ENCODE measurements at regions of chr14 and their contacts with region 1.

Region 1: DNA sequence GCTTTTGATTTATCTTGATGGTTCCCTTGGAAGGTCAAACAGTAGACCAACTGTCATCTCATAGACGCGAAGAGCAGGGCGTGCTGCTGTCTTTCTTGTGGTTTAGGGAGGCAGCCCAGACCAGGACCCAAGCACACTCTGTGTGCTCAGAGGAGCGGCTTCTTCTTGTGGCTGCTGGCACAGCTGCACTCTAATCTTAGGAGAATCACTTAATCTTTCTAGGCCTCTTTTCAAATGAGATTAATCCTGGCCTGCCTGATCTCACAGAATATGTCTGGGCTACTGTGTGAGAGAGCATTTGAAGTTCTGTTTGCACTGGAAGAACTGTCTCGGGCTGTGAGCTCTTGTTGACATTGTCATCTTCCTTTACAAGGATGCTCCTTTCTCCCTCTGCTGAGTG is 60.0 kb upstream of the TRAF3 start:
- DNase-seq: no peak
- ATAC-seq: no peak
- H3K4me3 ChIP-seq: no peak overlapping the region
- H3K27ac ChIP-seq: no peak overlapping the region
- H3K4me1 ChIP-seq: no peaks in the 10 kb centered on the region
- H3K27me3 ChIP-seq: no peaks in the 10 kb centered on the region
- CTCF ChIP-seq: no peak
- POLR2A ChIP-seq: no peak
- RAD21 ChIP-seq: no peak

Region 2: DNA sequence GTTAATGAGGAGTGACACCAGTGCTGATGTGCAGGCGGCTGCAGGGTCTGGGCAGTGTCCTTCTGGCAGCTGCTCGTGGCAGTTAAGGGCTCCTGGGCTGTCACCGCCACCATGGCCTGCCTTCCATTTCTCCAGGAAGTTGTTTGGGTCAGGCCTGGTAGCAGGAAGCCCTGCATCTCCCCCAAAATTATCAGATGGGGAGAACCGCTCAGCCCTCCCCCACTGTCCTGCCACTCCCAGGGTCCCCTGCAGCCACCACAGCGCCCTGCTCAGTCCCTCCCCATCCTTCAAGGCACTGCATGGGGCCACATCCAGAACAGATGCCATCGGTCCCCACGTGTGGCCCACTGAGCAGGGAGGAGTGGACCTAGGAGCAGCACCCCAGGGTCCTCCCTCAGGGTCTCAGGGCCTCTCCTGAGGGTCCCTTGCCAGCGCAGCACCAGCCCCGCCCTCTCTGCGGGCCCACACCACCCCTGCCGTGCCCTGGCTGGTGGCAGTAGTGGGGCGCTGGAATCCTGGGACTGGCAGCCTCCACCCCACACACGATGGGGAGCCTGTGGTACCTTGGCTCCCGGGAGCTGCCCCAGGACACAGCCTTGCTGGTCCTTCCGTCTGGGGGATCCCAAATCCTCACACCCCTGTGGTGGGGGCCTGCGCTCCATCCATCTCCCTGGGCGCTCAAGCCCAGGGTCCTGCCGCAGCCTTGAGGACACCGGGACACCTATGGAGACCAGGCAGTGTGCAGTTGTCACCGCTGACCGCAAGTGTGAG is 194.9 kb after region 1 on chr14:
- CTCF ChIA-PET with region 1: no interaction called
- POLR2A ChIA-PET with region 1: interaction called, 11 read pairs
- dilution Hi-C with region 1: no loop called
- in situ Hi-C with region 1: no loop called
- intact Hi-C with region 1: no loop called
- DNase-seq: no peak
- ATAC-seq: no peak
- H3K4me3 ChIP-seq: no peak overlapping the region
- H3K27ac ChIP-seq: no peak overlapping the region
- H3K4me1 ChIP-seq: no peaks in the 10 kb centered on the region
- H3K27me3 ChIP-seq: no peaks in the 10 kb centered on the region
- CTCF ChIP-seq: no peak
- POLR2A ChIP-seq: no peak
- RAD21 ChIP-seq: no peak

Region 3: DNA sequence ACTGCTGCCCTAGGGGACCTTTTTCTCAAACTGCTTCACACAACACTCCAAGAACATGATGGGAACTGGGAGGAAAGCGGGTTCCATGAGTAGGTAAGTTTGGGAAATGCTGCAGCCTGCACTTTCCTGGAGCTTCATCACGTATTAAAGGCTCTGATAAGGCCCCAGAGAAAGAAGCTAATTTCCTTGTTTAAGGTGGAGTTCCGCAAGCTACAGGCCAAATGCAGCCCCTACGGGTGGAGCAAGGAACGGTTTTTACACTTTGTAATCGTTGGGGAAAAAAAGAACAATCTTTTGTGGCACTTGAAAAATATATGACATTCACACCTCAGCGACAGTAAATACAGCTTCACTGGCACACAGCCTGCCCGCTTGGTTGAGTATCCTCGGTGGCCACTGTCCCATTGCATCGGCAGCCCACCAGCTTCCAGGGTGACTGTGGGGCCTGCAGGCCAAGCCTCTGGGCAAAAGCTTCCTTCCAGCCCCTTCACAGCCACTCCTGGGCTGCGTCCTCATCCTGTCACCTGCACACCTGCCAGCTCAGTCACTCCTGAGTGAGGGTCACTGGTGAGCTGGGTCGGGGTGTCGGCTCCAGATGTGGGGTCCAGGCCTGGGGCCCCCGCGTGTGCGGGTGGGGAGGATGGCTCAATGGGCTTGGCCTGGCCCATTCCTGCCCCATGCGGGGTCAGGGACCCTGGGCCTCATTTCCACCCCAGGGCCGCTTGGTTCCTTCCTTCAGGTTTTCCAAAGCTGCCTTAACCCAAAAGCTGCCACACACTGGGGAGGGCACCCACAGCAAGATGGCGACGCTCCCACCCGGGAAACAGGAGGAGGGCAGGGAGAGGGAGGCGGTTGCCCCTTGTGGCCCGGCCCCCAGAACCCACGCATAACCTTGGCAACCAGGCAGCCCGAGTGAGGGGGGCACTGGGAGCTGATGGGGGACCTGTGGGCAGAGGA is 207.6 kb after region 1 on chr14:
- CTCF ChIA-PET with region 1: no interaction called
- POLR2A ChIA-PET with region 1: interaction called, 18 read pairs
- dilution Hi-C with region 1: no loop called
- in situ Hi-C with region 1: no loop called
- intact Hi-C with region 1: no loop called
- DNase-seq: no peak
- ATAC-seq: no peak
- H3K4me3 ChIP-seq: no peak overlapping the region
- H3K27ac ChIP-seq: no peak overlapping the region
- H3K4me1 ChIP-seq: peaks cover 13% of the 10 kb centered on the region
- H3K27me3 ChIP-seq: peaks cover 76% of the 10 kb centered on the region
- CTCF ChIP-seq: no peak
- POLR2A ChIP-seq: no peak
- RAD21 ChIP-seq: no peak

Measured in IMR-90 (cell line).